Activated B cell treated with CpG ODN at 0.5 μM for 24 hours (primary cell): ENCODE measurements at regions of chrX and their contacts with region 1.

Region 1: GRCh38 chrX:103918581-103919269 is 43.7 kb upstream of the TMSB15B start:
- DNase-seq: peak; percentile 45
- ATAC-seq: peak; percentile 70
- H3K4me3 Mint-ChIP-seq: peak overlapping the region; percentile 87
- H3K27ac Mint-ChIP-seq: peak overlapping the region; percentile 84
- H3K4me1 Mint-ChIP-seq: peaks cover 11% of the 10 kb centered on the region
- H3K27me3 Mint-ChIP-seq: no peaks in the 10 kb centered on the region
- CTCF ChIP-seq: no peak

Region 2: GRCh38 chrX:103941201-103941975 is 22.7 kb after region 1 on chrX:
- CTCF ChIA-PET with region 1: interaction called, 6 read pairs
- POLR2A ChIA-PET with region 1: no interaction called
- intact Hi-C with region 1: loop called (anchors 1 kb)
- DNase-seq: no peak
- ATAC-seq: no peak
- H3K4me3 Mint-ChIP-seq: no peak overlapping the region
- H3K27ac Mint-ChIP-seq: no peak overlapping the region
- H3K4me1 Mint-ChIP-seq: peaks cover 14% of the 10 kb centered on the region
- H3K27me3 Mint-ChIP-seq: no peaks in the 10 kb centered on the region
- CTCF ChIP-seq: no peak

Region 3: DNA sequence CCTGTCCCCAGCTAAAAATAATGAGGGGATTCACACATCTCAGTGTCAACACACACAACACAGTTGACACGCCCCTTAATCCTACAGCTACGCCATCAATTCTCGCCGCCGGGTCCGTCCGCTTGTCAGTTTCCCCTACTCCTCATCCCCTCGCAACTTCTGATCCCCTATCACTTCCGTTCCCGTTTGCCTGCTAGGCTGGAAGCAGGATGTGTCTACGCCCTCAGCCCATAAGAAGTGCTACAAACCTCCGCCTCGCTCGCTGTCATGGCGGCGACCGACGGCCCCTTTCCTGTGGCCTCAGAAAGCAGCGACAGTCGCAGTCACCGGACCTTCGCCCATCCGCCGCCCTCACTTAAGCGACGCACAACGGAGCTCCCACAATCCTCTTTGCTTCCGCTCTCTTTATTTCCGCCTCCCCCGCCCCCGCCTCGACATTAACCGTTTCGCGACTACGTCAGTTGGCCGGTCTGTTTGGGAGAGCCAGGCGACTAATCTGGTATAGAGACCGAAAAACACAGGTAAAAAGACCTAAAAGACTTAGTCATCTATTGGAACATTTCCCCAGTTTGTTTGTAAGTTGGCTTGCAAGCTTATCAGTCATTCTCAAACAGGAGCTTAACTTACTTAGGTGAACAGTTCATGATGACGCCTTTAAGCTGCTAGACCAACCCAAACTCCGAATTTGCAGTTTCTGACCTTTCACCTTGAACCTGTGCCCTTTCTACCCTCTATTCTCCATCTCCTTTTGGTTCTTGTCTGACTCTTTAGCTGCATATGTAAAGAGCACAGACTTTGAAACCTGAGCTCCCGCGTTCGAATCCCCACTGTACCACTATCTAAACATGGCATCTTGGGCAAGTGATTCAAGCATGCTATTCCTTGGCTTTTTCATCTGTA is 238.2 kb after region 1 on chrX and contains the start of gene SLC25A53:
- CTCF ChIA-PET with region 1: no interaction called
- POLR2A ChIA-PET with region 1: no interaction called
- intact Hi-C with region 1: loop called (anchors 1 kb)
- DNase-seq: peak; percentile 67
- ATAC-seq: peak; percentile 89
- H3K4me3 Mint-ChIP-seq: peak within 1 kb of the TSS; percentile 100
- H3K27ac Mint-ChIP-seq: peak within 1 kb of the TSS; percentile 100
- H3K4me1 Mint-ChIP-seq: peaks cover 12% of the 10 kb centered on the region
- H3K27me3 Mint-ChIP-seq: no peaks in the 10 kb centered on the region
- CTCF ChIP-seq: no peak
- total RNA-seq, gene SLC25A53: 9.6 and 11.6 TPM in 2 replicates